Activated T-helper 2 cell treated with anti-CD3 and anti-CD28 coated beads, Interferon-gamma antibody, Interleukin-2, Interleukin-4, amounts not matched to agents 10 μg/mL and 5 μg/mL and 100 μg/mL, durations not matched to agents 14 hours and 24 hours and 36 hours (primary cell): ENCODE measurements at regions of chr16 and their contacts with region 1.

Region 1: GRCh38 chr16:30429678-30430427 is at the start of gene DCTPP1:
- DNase-seq: peak; percentile 96
- H3K4me3 Mint-ChIP-seq: no peak within 1 kb of the TSS
- H3K27ac Mint-ChIP-seq: no peak within 1 kb of the TSS
- H3K4me1 Mint-ChIP-seq: peaks cover 20% of the 10 kb centered on the region
- H3K27me3 Mint-ChIP-seq: no peaks in the 10 kb centered on the region
- total RNA-seq, gene DCTPP1: 127 and 128 TPM in 2 replicates

Region 2: DNA sequence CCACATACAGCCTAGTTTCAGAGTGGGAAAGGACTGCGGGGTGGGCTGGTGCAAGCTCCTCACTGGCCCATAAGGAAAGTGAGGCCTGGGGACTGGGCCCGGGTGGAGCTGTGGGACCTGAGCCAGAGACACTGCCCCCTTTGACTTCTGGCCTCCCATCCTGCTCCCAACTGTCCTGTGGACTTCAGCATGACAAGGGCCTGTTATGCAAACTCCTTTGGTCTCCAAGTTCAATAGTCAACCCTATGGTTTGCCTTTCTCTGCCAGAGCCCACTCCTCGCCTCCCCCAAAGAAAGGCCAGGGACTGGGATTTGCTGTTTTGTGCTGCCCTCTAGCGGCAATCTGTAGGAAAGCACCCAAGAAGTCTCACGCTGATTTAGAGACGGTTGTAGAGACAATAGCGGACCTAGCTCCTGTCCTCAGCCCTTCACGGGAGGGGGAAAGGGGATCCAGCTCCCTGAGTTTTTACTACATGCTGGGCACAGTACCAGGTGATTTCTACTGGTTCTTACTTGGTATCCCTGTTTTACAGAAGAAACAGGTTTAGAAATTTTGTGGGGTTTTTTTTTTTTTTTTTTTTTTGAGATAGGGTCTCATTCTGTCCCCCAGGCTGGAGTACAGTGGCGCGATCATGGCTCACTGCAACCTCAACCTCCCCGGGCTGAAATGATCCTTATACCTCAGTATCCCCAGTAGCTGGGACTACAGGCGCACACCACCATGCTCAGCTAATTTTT is 397.6 kb before region 1 on chr16:
- intact Hi-C with region 1: no loop called
- DNase-seq: peak; percentile 57
- H3K4me3 Mint-ChIP-seq: peak overlapping the region; percentile 27
- H3K27ac Mint-ChIP-seq: no peak overlapping the region
- H3K4me1 Mint-ChIP-seq: peaks cover 12% of the 10 kb centered on the region
- H3K27me3 Mint-ChIP-seq: peaks cover 48% of the 10 kb centered on the region

Region 3: DNA sequence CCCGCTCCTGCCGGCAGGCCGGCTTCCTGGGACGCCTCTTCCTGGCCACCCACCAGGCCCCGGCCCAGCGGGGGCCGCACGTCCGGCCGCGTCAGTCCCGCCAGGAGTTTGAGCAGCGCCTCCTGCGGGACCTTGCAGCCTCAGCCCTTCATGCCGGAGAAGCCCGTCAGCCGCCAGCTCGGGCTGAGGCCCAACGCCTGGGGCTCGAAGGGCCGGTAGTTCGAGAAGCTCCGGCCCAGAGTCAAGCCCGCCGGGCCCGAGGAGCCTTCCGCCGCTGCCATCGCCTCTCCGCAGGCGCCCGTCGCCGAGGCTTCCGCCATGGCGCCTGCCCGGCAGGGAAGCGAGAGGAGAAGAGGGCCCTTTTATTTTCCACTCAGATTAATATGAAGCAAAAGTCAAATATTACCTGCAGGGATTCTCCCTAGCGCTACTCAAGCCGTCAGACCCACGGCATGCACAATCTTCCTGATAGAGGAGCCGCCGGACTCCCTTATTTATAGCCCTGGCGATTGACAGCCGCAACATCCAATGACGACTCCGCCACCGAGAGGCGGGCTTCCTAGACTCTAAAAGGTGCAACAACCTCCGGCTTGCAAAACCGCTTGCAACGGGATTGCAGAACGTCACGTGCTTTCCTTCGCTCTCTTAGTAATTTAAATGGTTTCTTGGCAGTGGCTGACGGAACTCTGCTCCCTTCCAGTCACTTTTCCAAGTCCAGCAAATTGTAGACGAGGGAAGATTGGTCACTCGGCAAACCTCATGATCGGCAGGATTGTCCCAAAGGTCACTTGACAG is 15.8 kb after region 1 on chr16 and contains the start of gene SEPHS2:
- intact Hi-C with region 1: loop called (anchors 1 kb)
- DNase-seq: peak; percentile 95
- H3K4me3 Mint-ChIP-seq: peak within 1 kb of the TSS; percentile 88
- H3K27ac Mint-ChIP-seq: peak within 1 kb of the TSS; percentile 94
- H3K4me1 Mint-ChIP-seq: peaks cover 45% of the 10 kb centered on the region
- H3K27me3 Mint-ChIP-seq: no peaks in the 10 kb centered on the region
- total RNA-seq, gene SEPHS2: 82.9 and 84.1 TPM in 2 replicates

Region 4: GRCh38 chr16:30472328-30472942 is 42.6 kb after region 1 on chr16 and contains the start of gene ITGAL:
- intact Hi-C with region 1: loop called (anchors 1 kb)
- DNase-seq: peak; percentile 83
- H3K4me3 Mint-ChIP-seq: peak within 1 kb of the TSS; percentile 99
- H3K27ac Mint-ChIP-seq: peak within 1 kb of the TSS; percentile 97
- H3K4me1 Mint-ChIP-seq: peaks cover 52% of the 10 kb centered on the region
- H3K27me3 Mint-ChIP-seq: no peaks in the 10 kb centered on the region
- total RNA-seq, gene ITGAL: 292 and 293 TPM in 2 replicates

Region 5: GRCh38 chr16:30602616-30603277 is 172.9 kb after region 1 on chr16:
- intact Hi-C with region 1: loop called (anchors 1 kb)
- DNase-seq: no peak
- H3K4me3 Mint-ChIP-seq: no peak overlapping the region
- H3K27ac Mint-ChIP-seq: no peak overlapping the region
- H3K4me1 Mint-ChIP-seq: peaks cover 9% of the 10 kb centered on the region
- H3K27me3 Mint-ChIP-seq: no peaks in the 10 kb centered on the region

Region 6: GRCh38 chr16:30628627-30629540 is 199.0 kb after region 1 on chr16:
- intact Hi-C with region 1: loop called (anchors 5 kb)
- DNase-seq: peak; percentile 77
- H3K4me3 Mint-ChIP-seq: peak overlapping the region; percentile 46
- H3K27ac Mint-ChIP-seq: peak overlapping the region; percentile 60
- H3K4me1 Mint-ChIP-seq: peaks cover 4% of the 10 kb centered on the region
- H3K27me3 Mint-ChIP-seq: peaks cover under 1% of the 10 kb centered on the region

Region 7: DNA sequence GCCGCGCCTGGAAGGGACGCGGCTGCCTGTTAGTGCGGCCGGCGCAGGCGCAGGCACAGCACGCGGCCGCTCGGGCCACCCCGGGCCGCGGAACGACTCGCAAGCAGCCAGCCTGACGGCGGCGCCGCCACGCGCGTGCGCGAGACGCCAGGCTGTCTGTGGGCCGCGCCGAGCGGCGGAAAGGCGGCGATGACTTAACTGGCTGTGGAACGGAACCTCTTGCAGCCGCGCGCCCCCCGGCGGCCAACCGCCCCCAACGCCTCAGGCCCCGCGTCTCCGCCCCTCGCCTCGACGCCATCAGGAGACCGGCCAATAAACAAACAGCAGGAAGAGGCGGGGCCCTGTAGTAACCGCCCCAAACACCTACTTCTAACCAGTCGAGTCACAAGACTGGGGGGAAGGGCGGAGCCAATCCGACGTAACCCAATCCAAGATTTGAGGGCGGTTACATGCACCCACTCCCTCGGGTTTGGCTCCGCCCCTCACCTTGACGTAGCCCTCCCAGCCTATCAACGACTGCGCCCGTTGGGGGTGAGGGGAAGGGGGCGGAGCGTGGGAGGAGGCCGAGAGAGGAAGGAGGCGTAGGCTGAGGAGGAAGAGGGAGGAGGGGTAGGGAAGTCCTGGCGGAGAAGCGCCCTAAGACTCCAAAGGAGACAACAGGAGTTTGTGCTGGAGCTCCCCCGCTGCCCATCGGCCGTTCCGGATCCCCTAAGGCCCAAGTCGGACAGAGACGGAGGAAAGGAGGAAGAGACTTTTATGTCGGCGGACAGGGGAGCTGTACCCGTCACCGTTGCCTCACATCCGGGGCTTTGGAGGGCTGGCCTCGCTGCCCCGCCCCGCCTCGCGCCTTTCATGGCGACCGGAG is 228.2 kb after region 1 on chr16 and contains the start of gene FBRS:
- intact Hi-C with region 1: loop called (anchors 1 kb)
- DNase-seq: peak; percentile 100
- H3K4me3 Mint-ChIP-seq: peak within 1 kb of the TSS; percentile 89
- H3K27ac Mint-ChIP-seq: peak within 1 kb of the TSS; percentile 100
- H3K4me1 Mint-ChIP-seq: peaks cover 27% of the 10 kb centered on the region
- H3K27me3 Mint-ChIP-seq: no peaks in the 10 kb centered on the region
- total RNA-seq, gene FBRS: 107 TPM in 2 replicates